ENCODE measurements at regions of chr15 and their contacts with region 1.

Region 1: DNA sequence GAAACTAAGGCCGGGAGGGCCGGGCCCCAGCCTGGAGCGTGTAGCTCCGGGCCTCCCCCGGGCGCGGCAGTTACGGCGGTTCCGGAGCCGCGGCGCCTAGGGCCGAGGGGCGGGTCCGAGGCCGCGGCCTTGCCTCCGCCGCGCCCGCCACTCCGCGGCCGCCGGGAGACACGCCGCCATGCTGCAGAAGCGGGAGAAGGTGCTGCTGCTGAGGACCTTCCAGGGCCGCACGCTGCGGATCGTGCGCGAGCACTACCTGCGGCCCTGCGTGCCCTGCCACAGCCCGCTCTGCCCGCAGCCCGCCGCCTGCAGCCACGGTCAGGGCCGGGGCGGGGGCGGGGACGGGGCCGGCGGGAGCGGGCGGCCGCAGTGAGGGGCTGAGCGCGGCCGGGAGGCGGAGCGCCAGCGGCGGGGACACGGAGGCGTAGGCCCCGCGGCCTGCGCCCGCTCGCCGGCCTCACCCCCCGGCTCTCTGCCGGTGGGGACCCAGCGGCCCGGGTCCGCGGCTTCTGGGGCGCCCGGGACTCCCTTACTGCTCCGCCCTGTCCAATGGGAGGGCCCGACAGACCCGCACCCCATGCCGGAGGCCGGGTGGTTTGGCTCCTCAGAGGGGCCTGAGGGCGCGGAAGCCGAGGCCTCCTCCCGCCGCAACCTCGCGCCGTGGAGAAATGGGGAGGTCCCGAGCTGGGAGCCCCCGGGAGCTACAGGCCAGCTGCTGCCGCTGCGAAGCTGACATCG is at the start of gene DIS3L:
- DNase-seq: peak; percentile 55 to 80 (median 69)
- ATAC-seq: peak; percentile 85
- H3K4me3 ChIP-seq: peak within 1 kb of the TSS; percentile 69
- H3K4me3 Mint-ChIP-seq: peak within 1 kb of the TSS; percentile 82 to 93 (median 89)
- H3K27ac ChIP-seq: peak within 1 kb of the TSS; percentile 84
- H3K27ac Mint-ChIP-seq: peak within 1 kb of the TSS; percentile 86 to 97 (median 96)
- H3K4me1 ChIP-seq: peaks cover 13 to 31% of the 10 kb centered on the region in 2 donors
- H3K4me1 Mint-ChIP-seq: peaks cover 20 to 57% (median 48%) of the 10 kb centered on the region in 7 donors
- H3K27me3 ChIP-seq: no peaks in the 10 kb centered on the region
- H3K27me3 Mint-ChIP-seq: peaks cover 0 to 4% (median 0%) of the 10 kb centered on the region in 5 donors
- total RNA-seq, gene DIS3L: 34.3 to 40.2 (median 38.1) TPM

Region 2: DNA sequence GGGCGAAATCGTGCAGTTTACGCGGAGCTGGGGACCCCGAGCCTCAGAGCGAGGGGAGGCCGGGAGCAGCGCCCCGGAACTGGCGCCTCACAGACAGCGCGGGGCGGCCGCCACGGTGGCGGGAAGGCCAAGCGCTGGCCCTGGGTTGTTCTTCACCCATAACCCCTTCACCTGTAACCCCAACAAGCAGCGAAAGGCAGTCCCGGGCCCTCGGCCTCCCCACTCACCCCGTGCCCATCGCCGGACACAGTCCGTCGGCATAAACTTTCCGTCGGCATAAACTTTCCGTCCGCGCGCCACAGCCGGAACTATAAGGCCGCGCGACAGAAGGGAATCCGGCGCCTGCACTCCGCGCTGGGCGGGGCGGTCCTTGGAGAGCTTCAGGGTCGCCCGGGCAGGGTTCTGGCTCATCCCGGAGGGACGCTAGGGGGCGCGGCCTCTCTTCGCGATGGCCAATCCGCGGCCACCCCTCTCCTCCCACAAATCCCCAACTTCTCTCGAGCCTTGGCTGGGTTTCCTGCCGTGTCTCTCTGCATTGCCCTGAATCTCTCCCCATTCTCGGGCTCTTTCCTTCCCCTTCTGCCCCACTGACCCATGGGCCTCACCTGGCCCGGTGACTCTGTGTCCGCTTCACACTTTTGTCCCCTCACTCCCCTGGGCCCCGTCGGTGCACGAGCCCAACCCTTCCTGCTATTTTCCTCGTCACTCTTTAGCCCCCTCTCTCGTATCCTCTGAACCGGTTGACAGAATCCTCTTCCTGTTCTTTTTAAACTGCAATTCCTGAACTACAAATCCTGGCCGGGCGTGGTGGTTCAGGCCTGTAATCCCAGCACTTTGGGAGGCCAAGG is 682.5 kb before region 1 on chr15 and contains the start of gene INTS14:
- CTCF ChIA-PET with region 1: no interaction called
- POLR2A ChIA-PET with region 1: no interaction called
- intact Hi-C with region 1: loop called in 1 of 2 experiments (anchors 10 kb)
- DNase-seq: peak; percentile 74 to 96 (median 80)
- ATAC-seq: peak; percentile 99
- H3K4me3 ChIP-seq: peak within 1 kb of the TSS; percentile 97
- H3K4me3 Mint-ChIP-seq: peak within 1 kb of the TSS; percentile 95 to 99 (median 98)
- H3K27ac ChIP-seq: peak within 1 kb of the TSS; percentile 89
- H3K27ac Mint-ChIP-seq: peak within 1 kb of the TSS; percentile 97 to 100 (median 98)
- H3K4me1 ChIP-seq: peaks cover 18 to 21% of the 10 kb centered on the region in 2 donors
- H3K4me1 Mint-ChIP-seq: peaks cover 11 to 44% (median 32%) of the 10 kb centered on the region in 7 donors
- H3K27me3 ChIP-seq: no peaks in the 10 kb centered on the region
- H3K27me3 Mint-ChIP-seq: no peaks in the 10 kb centered on the region
- total RNA-seq, gene INTS14: 19.1 to 38.3 (median 35.9) TPM

Region 3: DNA sequence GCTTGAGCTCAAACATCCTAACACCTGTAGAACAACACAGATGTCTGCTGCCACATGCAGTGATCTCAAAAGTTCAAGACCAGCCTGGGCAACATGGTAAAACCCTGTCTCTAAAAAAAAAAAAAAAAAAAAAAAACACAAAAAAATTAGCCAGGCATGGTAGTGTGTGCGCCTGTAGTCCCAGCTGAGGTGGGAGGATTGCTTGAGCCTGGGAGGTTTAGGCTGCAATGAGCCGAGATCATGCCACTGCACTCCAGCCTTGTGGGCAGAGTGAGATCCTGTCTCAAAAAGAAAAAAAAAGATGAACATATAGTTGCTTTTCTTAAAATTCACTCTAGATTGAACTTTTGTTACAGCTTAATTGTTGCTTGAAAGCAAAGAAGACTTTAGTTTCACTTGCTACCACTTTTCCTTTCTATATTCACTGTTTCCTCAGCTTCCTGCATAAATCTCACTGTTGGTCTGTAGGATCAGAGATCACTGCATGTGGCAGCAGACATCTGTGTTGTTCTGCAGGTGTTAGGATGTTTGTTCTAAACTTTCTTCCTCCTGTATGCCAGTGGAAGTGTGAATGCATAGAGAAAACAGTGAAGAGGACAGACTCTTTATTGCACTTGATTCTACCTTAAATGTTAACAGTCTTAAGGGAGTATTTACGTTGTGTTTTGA is 411.7 kb before region 1 on chr15:
- CTCF ChIA-PET with region 1: no interaction called
- POLR2A ChIA-PET with region 1: no interaction called
- intact Hi-C with region 1: loop called in 1 of 2 experiments (anchors 10 kb)
- DNase-seq: peak in 6 of 9 donors; percentile 17 to 48 (median 33)
- ATAC-seq: peak; percentile 43
- H3K4me3 ChIP-seq: no peak overlapping the region
- H3K4me3 Mint-ChIP-seq: peak overlapping the region; percentile 37 to 82 (median 62)
- H3K27ac ChIP-seq: peak overlapping the region; percentile 57
- H3K27ac Mint-ChIP-seq: peak overlapping the region; percentile 51 to 99 (median 90)
- H3K4me1 ChIP-seq: peaks cover 7 to 46% of the 10 kb centered on the region in 2 donors
- H3K4me1 Mint-ChIP-seq: peaks cover 24 to 82% (median 67%) of the 10 kb centered on the region in 7 donors
- H3K27me3 ChIP-seq: no peaks in the 10 kb centered on the region
- H3K27me3 Mint-ChIP-seq: no peaks in the 10 kb centered on the region

Region 4: DNA sequence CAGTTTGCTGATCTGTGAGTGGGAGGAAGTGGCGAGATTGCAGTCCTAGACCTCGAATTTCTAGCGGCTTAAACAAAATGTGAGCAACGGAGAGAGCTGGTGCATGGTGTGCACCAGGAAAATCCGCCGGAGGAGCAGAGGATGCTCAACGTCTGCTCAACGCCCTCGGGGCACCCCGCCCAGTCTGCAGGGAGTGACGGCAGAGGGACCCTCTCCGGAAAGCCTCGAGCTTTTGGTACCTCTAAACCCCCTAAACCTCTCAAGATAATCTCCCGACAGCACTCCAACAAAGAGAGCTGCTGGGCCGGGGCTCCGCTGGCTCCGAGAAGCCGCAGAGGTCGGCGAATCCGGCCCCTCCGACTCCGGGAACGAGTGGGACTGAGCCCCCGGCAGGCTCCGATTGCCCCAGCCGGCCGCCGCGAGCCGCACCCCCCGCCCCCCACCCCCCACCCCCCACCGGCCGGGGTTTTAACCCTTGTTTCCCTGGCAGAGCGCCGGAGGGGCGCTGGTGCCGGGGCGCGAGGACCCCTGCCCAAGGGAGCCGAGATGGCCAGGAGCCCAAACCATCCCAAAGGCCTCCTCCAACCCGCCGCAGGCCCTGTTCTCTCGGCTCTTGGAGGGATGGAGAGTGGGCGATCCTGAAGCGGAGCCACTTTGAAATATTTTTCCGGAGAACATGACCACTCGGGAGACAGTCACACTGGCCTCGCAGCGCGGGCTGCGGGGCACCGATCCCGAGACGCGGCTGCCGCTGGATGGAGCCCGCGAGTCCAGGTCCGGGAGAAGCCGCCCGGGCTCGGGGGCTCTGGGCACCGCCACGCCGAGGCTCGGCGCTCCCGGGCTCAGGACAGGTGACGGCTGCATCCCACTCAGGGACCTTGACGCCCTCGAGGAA is 41.6 kb before region 1 on chr15:
- CTCF ChIA-PET with region 1: no interaction called
- POLR2A ChIA-PET with region 1: no interaction called
- intact Hi-C with region 1: loop called in 1 of 2 experiments (anchors 5 kb)
- DNase-seq: peak in 7 of 9 donors; percentile 22 to 63 (median 36)
- ATAC-seq: peak; percentile 73
- H3K4me3 ChIP-seq: peak overlapping the region; percentile 76
- H3K4me3 Mint-ChIP-seq: peak overlapping the region; percentile 58 to 96 (median 79)
- H3K27ac ChIP-seq: no peak overlapping the region
- H3K27ac Mint-ChIP-seq: no peak overlapping the region
- H3K4me1 ChIP-seq: peaks cover 0 to 14% of the 10 kb centered on the region in 2 donors
- H3K4me1 Mint-ChIP-seq: peaks cover 7 to 28% (median 18%) of the 10 kb centered on the region in 7 donors
- H3K27me3 ChIP-seq: peaks cover 3 to 28% of the 10 kb centered on the region in 2 donors
- H3K27me3 Mint-ChIP-seq: peaks cover 54 to 89% (median 70%) of the 10 kb centered on the region in 5 donors

Region 5: DNA sequence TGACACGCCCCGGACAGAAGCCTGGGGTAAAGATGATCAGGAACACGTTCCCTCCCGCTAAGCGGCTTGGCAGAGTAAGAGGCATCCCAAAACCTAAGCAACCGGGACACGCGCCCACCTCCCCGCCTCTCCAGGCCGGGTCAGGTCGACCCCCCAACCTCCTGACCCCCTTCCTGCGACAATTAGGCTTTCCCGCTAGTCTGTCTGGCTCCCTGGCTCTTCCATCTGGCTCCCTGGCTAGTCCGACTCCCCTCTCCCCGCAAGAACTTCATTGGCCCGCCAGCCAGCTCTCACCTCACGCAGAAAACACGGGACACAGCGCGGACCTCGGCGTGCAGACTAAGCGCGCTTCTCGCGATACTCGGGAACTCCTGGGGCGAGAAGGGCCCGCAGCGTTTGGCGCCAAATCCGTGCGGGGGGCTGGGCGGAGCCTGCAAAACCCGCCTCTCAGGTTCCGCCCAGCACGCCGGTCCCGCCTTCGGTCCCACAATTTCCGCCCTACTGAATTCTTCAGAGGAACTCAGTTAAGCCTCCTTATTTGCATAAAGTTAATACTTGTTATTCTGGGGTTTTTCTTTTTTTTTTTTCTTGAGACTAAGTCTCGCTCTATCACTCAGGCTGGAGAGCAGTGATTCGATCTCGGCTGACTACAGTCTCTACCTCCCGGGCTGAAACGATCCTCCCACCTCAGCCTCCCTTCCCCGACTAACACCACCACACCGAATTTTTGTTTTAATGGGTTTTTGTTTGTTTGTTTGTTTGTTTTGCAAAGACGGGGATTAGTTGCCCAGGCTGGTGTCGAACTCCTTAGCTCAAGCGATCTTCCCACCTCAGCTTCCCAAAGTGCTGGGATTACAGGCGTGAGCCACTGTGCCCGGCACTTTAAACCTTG is 63.0 kb after region 1 on chr15 and contains the start of gene TIPIN:
- CTCF ChIA-PET with region 1: no interaction called
- POLR2A ChIA-PET with region 1: no interaction called
- intact Hi-C with region 1: loop called (anchors 1 kb)
- DNase-seq: peak; percentile 90 to 96 (median 95)
- ATAC-seq: peak; percentile 99
- H3K4me3 ChIP-seq: peak within 1 kb of the TSS; percentile 92
- H3K4me3 Mint-ChIP-seq: peak within 1 kb of the TSS; percentile 92 to 100 (median 96)
- H3K27ac ChIP-seq: peak within 1 kb of the TSS; percentile 82
- H3K27ac Mint-ChIP-seq: peak within 1 kb of the TSS; percentile 90 to 98 (median 97)
- H3K4me1 ChIP-seq: peaks cover 4 to 6% of the 10 kb centered on the region in 2 donors
- H3K4me1 Mint-ChIP-seq: peaks cover 18 to 35% (median 26%) of the 10 kb centered on the region in 7 donors
- H3K27me3 ChIP-seq: no peaks in the 10 kb centered on the region
- H3K27me3 Mint-ChIP-seq: no peaks in the 10 kb centered on the region
- total RNA-seq, gene TIPIN: 3.8 to 28.2 (median 9.9) TPM

Region 6: GRCh38 chr15:66504563-66505429 is 211.2 kb after region 1 on chr15 and contains the starts of genes RPL4 and ZWILCH:
- CTCF ChIA-PET with region 1: no interaction called
- POLR2A ChIA-PET with region 1: interaction called, 6 read pairs
- intact Hi-C with region 1: loop called (anchors 2 kb)
- DNase-seq: peak; percentile 65 to 88 (median 83)
- ATAC-seq: peak; percentile 93
- H3K4me3 ChIP-seq: peak within 1 kb of the TSS; percentile 99
- H3K4me3 Mint-ChIP-seq: peak within 1 kb of the TSS; percentile 90 to 100 (median 100)
- H3K27ac ChIP-seq: peak within 1 kb of the TSS; percentile 93
- H3K27ac Mint-ChIP-seq: peak within 1 kb of the TSS; percentile 92 to 100 (median 99)
- H3K4me1 ChIP-seq: peaks cover 13 to 22% of the 10 kb centered on the region in 2 donors
- H3K4me1 Mint-ChIP-seq: peaks cover 21 to 57% (median 41%) of the 10 kb centered on the region in 7 donors
- H3K27me3 ChIP-seq: no peaks in the 10 kb centered on the region
- H3K27me3 Mint-ChIP-seq: no peaks in the 10 kb centered on the region
- total RNA-seq, gene RPL4: 2,229 to 4,292 (median 4,136) TPM
- total RNA-seq, gene ZWILCH: 5.6 to 20.3 (median 6.8) TPM

Measured in naive thymus-derived CD4-positive, alpha-beta T cell (primary cell).